ENCODE measurements at regions of chr15 and their contacts with region 1.

Region 1: DNA sequence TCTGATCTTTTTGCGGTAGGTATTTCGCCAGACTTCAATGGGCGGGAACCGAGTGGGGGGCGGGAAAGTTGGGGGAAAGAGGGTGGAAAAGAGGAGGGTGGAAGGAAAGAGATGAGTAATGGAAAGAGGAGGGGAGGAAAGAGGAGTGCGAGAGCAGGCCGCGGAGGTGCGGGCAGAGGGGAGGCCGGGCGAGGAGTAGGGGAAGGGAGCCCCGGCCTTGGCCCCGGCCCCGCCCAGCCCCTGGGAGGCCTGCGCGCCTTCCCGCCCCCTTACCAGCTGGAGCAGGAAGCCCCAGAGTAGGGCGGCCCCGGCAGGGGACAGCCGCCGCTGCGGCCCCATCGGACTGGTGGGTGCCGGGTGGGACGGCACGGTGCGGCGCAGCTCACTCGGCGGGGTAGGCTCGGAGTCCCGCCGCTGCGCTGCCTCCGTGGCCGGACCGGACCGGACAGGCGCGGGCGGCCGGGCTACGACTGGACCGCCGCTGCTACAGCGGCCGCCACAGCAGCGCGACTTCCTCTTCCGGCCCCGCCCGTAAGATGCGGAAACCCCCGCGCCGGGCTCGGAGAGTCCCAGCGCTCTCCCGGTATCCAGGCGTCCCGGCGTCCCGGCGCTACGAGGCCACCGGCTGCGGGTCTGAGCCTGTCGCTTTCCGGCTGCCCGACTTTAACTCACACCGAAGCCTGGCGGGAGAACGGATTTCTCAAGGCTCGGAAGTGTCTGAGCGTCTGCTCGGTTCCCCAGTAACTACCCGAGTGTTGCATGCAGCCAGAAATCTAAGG is at the start of gene SPPL2A:
- DNase-seq: peak; percentile 91 to 94 (median 93)
- ATAC-seq: peak; percentile 96 to 97
- H3K4me3 ChIP-seq: peak within 1 kb of the TSS; percentile 63
- H3K27ac ChIP-seq: peak within 1 kb of the TSS; percentile 93
- H3K4me1 ChIP-seq: peaks cover 2% of the 10 kb centered on the region
- H3K27me3 ChIP-seq: no peaks in the 10 kb centered on the region
- total RNA-seq, gene SPPL2A: 110 to 120 (median 116) TPM

Region 2: DNA sequence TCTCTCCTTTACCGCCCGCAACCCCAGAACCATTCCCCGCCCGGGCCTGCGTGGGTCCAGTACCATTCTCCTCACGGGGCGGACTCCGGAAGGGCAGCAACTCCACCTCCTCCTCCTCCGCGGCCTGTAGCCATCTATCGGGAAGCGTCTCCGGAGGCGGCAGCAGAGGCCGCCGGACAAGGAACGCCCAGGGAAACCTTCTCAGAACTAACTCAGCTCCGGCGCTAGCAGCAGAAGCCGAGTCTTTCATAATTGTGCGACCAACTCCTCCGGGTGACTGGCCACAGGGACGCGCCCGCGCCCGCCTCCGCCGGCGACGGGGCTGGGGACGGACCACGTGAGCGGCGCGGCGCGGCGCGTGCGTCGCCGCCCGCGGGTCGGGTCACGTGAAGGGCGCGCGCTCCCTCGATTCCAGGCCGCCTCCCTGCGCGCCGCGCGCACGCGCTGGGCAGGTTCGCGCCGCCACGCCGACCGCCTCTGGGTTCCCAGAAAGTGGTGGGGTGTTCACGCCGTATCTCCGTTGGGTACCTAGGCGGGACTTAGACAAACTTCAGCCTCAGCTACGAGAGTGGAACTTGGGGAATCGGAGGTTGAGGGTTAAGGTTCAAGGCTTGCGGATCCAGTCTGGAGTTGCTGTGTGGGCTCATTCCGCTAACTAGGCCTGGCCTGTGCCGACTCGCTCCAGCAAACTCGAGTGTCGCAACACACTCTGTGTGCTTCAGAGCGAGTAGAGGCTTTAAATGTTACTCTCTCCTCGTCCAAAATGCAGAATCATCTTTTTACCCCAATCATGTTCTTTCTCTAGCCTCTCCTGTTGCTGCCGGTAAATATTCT is 78.7 kb before region 1 on chr15 and contains the start of gene TRPM7:
- intact Hi-C with region 1: loop called in 2 of 4 experiments (anchors 10 kb)
- DNase-seq: peak; percentile 90 to 97 (median 96)
- ATAC-seq: peak; percentile 97 to 98
- H3K4me3 ChIP-seq: peak within 1 kb of the TSS; percentile 72
- H3K27ac ChIP-seq: peak within 1 kb of the TSS; percentile 98
- H3K4me1 ChIP-seq: peaks cover 6% of the 10 kb centered on the region
- H3K27me3 ChIP-seq: no peaks in the 10 kb centered on the region
- total RNA-seq, gene TRPM7: 29.0 to 36.9 (median 30.9) TPM